ENCODE measurements at regions of chr17 and their contacts with region 1.

Region 1: DNA sequence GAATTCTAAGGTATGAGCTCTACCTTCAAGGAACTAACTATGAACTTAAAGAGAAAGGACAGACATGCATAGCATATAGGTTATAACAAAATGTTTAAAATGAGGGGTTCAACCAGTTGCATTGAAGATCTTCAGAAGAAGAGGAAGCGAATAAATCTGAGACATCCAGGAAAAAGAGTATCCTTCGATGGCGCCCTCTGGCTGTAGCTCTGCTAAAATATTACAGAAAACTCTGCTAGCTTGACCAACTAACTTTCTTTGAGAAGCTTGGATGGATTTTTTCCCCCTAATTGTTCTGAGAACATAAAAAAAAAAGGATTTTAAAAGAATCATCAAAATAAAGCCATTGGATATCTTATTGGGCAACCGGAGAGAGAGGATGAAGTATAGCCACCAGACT is 659.9 kb upstream of the SOX9 start:
- DNase-seq: no peak
- ATAC-seq: no peak
- H3K4me3 ChIP-seq: no peak overlapping the region
- H3K27ac ChIP-seq: no peak overlapping the region
- H3K4me1 ChIP-seq: no peaks in the 10 kb centered on the region
- H3K27me3 ChIP-seq: no peaks in the 10 kb centered on the region
- CTCF ChIP-seq: peak; percentile 7 to 26 (median 16); a peak in 3 of 6 replicates
- EP300 ChIP-seq: no peak
- POLR2A ChIP-seq: no peak
- RAD21 ChIP-seq: peak; percentile 13; the same call in 1 of the 2 replicates

Region 2: GRCh38 chr17:71084219-71084618 is 376.7 kb before region 1 on chr17:
- CTCF ChIA-PET with region 1: interaction called, 4 read pairs
- POLR2A ChIA-PET with region 1: no interaction called
- RAD21 ChIA-PET with region 1: no interaction called
- SMC1A ChIA-PET with region 1: no interaction called
- in situ Hi-C with region 1: no loop called
- intact Hi-C with region 1: loop called (anchors 5 kb)
- DNase-seq: no peak
- ATAC-seq: peak; percentile 62
- H3K4me3 ChIP-seq: no peak overlapping the region
- H3K27ac ChIP-seq: no peak overlapping the region
- H3K4me1 ChIP-seq: no peaks in the 10 kb centered on the region
- H3K27me3 ChIP-seq: no peaks in the 10 kb centered on the region
- CTCF ChIP-seq: peak; percentile 18 to 35 (median 29); a peak in 3 of 6 replicates
- EP300 ChIP-seq: no peak
- POLR2A ChIP-seq: no peak
- RAD21 ChIP-seq: peak; percentile 48; the same call in 1 of the 2 replicates

Region 3: DNA sequence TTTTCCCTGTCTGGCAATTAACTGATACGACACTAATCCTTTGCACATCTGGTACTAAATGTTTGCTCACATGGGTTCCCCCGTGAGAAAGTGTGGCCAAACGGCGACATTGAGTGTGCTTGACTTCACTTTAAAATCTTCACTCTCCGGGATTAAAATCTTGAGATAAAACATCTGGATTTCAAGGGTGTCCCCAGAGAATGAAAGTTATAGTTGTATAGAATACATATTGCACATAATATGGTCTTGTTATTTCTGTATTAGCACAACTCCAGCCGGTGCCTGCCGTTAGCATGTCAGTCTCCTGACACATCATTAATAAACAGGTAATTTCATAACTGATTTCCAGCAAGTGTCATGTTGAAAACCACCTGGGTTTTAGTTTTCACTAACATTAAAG is 89.1 kb before region 1 on chr17:
- CTCF ChIA-PET with region 1: no interaction called
- POLR2A ChIA-PET with region 1: no interaction called
- RAD21 ChIA-PET with region 1: no interaction called
- SMC1A ChIA-PET with region 1: no interaction called
- in situ Hi-C with region 1: no loop called
- intact Hi-C with region 1: no loop called
- DNase-seq: no peak
- ATAC-seq: no peak
- H3K4me3 ChIP-seq: no peak overlapping the region
- H3K27ac ChIP-seq: no peak overlapping the region
- H3K4me1 ChIP-seq: no peaks in the 10 kb centered on the region
- H3K27me3 ChIP-seq: no peaks in the 10 kb centered on the region
- CTCF ChIP-seq: no peak
- EP300 ChIP-seq: no peak
- POLR2A ChIP-seq: no peak
- RAD21 ChIP-seq: no peak

Region 4: GRCh38 chr17:71441098-71441497 is 19.8 kb before region 1 on chr17:
- CTCF ChIA-PET with region 1: interaction called, 10 read pairs
- POLR2A ChIA-PET with region 1: no interaction called
- RAD21 ChIA-PET with region 1: no interaction called
- SMC1A ChIA-PET with region 1: no interaction called
- in situ Hi-C with region 1: no loop called
- intact Hi-C with region 1: no loop called
- DNase-seq: no peak
- ATAC-seq: no peak
- H3K4me3 ChIP-seq: no peak overlapping the region
- H3K27ac ChIP-seq: no peak overlapping the region
- H3K4me1 ChIP-seq: no peaks in the 10 kb centered on the region
- H3K27me3 ChIP-seq: no peaks in the 10 kb centered on the region
- CTCF ChIP-seq: no peak
- EP300 ChIP-seq: no peak
- POLR2A ChIP-seq: no peak
- RAD21 ChIP-seq: no peak